ENCODE measurements at regions of chr10 and their contacts with region 1.

Region 1: DNA sequence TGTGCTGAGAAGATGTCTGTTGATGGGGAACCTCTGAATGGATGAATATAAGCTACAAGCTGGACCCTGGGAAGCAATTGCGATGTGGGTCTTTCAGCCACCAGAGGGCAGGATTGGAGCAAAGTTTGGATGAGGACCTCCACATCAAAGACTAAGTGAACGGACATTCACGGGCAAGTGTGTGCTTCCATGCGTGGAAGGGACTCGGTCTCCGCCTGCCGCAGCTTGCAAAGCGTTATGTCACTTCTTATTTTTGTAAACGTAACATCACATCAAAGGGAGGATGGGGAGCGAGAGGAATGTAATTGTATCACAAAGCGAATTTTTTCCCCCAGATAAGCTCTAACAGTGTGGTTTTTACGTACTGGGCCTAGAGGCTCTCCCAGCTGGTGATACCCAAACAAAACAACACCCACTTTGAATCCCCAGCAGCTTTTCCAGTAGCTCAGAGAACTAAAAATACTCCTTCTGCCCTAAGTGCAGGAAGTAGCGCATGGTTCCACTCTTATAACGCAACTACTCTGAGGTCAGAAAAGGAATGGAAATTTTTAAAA is 65.0 kb downstream of the VWA2 start:
- DNase-seq: peak; percentile 69
- ATAC-seq: peak; percentile 80 to 90
- H3K4me3 ChIP-seq: peak overlapping the region; percentile 41
- H3K27ac ChIP-seq: no peak overlapping the region
- H3K4me1 ChIP-seq: peaks cover 10% of the 10 kb centered on the region
- H3K27me3 ChIP-seq: no peaks in the 10 kb centered on the region
- CTCF ChIP-seq: peak; percentile 81

Region 2: GRCh38 chr10:114458955-114459354 is 154.9 kb after region 1 on chr10:
- intact Hi-C with region 1: loop called (anchors 10 kb)
- DNase-seq: peak; percentile 65
- ATAC-seq: peak; percentile 62 to 79
- H3K4me3 ChIP-seq: no peak overlapping the region
- H3K27ac ChIP-seq: no peak overlapping the region
- H3K4me1 ChIP-seq: no peaks in the 10 kb centered on the region
- H3K27me3 ChIP-seq: no peaks in the 10 kb centered on the region
- CTCF ChIP-seq: peak; percentile 54

Measured in lower lobe of right lung (tissue), 2 donors.